WTC11 (cell line): ENCODE measurements at regions of chr1 and their contacts with region 1.

Region 1: DNA sequence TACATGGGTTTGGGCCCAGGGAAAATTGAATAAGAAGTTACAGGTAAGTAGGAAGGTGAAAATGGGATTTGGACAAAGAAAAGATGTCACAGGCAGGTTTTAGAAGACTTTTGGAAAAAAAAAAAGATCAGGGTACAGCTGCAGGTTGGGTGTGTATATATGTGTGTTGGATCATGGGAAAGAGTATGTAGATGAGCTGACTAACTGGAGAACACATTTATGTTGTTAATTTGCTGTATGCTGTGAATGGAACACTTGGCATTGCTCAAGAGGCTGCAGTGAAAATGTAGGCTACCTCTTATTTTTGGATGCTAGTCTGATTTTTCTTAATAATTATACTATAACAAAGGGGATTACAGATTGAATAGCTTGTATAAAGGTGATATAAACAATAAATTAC is 577.7 kb upstream of the USP24 start:
- DNase-seq: no peak
- ATAC-seq: no peak
- H3K4me3 Mint-ChIP-seq: no peak overlapping the region
- H3K27ac Mint-ChIP-seq: no peak overlapping the region
- H3K4me1 Mint-ChIP-seq: no peaks in the 10 kb centered on the region
- H3K27me3 Mint-ChIP-seq: no peaks in the 10 kb centered on the region
- CTCF ChIP-seq: no peak

Region 2: GRCh38 chr1:55670331-55671082 is 122.4 kb before region 1 on chr1:
- CTCF ChIA-PET with region 1: no interaction called
- POLR2A ChIA-PET with region 1: interaction called, 10 read pairs
- DNase-seq: no peak
- ATAC-seq: no peak
- H3K4me3 Mint-ChIP-seq: no peak overlapping the region
- H3K27ac Mint-ChIP-seq: no peak overlapping the region
- H3K4me1 Mint-ChIP-seq: no peaks in the 10 kb centered on the region
- H3K27me3 Mint-ChIP-seq: no peaks in the 10 kb centered on the region
- CTCF ChIP-seq: no peak

Region 3: DNA sequence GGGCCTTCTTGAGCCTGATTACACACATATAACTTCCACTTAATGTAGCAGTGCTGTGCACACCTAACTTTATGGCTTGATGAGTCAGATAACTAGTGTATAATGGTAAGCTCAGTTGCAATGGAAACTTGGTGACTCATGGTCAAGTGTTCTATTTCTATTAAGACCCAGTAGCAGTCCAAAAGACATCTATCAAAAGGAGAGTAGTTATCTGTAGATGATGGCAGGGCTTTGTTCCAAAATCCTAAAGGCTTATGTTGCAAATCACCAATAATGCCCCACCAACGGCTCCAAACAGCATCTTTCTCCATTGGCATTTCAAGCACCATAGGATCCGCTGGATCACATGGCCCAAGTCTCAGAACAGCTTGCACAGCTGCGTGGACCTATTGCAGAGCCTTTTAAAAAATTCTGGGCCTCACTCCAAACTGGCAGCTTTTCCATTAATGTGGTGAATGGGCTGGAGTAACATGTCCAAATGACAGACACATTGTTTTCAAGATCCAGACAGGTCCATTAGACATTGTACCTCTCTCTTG is 10.9 kb before region 1 on chr1:
- CTCF ChIA-PET with region 1: no interaction called
- POLR2A ChIA-PET with region 1: no interaction called
- DNase-seq: no peak
- ATAC-seq: no peak
- H3K4me3 Mint-ChIP-seq: no peak overlapping the region
- H3K27ac Mint-ChIP-seq: no peak overlapping the region
- H3K4me1 Mint-ChIP-seq: peaks cover 18% of the 10 kb centered on the region
- H3K27me3 Mint-ChIP-seq: no peaks in the 10 kb centered on the region
- CTCF ChIP-seq: no peak

Region 4: GRCh38 chr1:55803429-55803828 is 10.6 kb after region 1 on chr1:
- CTCF ChIA-PET with region 1: no interaction called
- POLR2A ChIA-PET with region 1: no interaction called
- DNase-seq: no peak
- ATAC-seq: no peak
- H3K4me3 Mint-ChIP-seq: no peak overlapping the region
- H3K27ac Mint-ChIP-seq: no peak overlapping the region
- H3K4me1 Mint-ChIP-seq: no peaks in the 10 kb centered on the region
- H3K27me3 Mint-ChIP-seq: no peaks in the 10 kb centered on the region; the same call in 1 of the 2 replicates
- CTCF ChIP-seq: no peak